ENCODE measurements at regions of chr10 and their contacts with region 1.

Region 1: GRCh38 chr10:90862908-90863514 is 5.2 kb upstream of the HTR7 start:
- DNase-seq: no peak
- H3K4me3 ChIP-seq: no peak overlapping the region
- H3K27ac ChIP-seq: no peak overlapping the region
- H3K4me1 ChIP-seq: peaks cover 0 to 9% (median 0%) of the 10 kb centered on the region in 3 donors
- H3K27me3 ChIP-seq: peaks cover 0 to 28% (median 0%) of the 10 kb centered on the region in 4 donors
- CTCF ChIP-seq: peak; percentile 26 to 84 (median 68)
- POLR2A ChIP-seq: no peak

Region 2: GRCh38 chr10:89793649-89794254 is 1069.3 kb before region 1 on chr10:
- intact Hi-C with region 1: loop called (anchors 10 kb)
- DNase-seq: no peak
- H3K4me3 ChIP-seq: no peak overlapping the region
- H3K27ac ChIP-seq: no peak overlapping the region
- H3K4me1 ChIP-seq: no peaks in the 10 kb centered on the region
- H3K27me3 ChIP-seq: no peaks in the 10 kb centered on the region
- CTCF ChIP-seq: peak; percentile 50 to 82 (median 76)
- POLR2A ChIP-seq: no peak

Region 3: DNA sequence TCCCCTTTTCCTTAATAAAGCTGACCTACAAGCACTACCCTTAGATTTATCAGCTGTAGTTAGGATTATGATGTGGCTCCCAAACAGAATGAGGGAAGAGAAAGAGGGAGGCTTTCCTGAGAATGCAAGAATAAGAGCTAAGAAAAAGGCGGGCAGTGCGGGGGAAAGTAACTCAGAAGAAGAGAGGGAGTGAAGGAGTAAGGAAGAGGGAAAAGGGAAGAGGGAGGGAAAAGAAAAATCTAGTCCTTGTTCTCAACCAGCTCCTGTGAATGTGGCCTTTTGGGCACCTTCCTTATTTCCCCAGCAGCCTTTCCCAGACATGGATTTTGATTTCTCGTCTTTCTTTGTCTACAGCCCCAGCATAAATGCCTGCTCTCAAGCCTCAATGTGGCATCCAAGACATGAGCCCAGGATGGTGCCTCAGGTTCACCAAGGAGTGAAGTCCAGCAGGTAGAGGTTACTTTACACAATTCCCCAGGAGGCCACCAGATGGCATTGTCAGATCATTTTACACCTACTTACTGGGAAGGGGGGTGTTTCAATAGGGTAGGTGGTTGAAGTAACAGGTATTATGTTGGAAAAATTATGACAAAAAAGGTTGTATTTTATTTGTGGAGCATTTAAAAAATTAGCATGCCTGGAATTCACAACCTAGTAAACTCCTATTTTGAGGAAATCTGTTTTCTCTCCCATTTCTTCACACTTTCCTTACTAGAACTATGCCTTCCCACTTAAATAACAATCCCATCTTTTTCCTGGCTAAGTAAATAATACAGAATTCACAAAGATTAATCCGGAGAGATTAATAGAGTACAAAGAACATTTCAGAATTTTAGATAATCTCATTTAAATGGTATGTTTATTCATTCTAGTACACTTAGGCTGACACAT is 111.7 kb before region 1 on chr10:
- intact Hi-C with region 1: loop called (anchors 5 kb)
- DNase-seq: no peak
- H3K4me3 ChIP-seq: no peak overlapping the region
- H3K27ac ChIP-seq: no peak overlapping the region
- H3K4me1 ChIP-seq: peaks cover 0 to 7% (median 0%) of the 10 kb centered on the region in 3 donors
- H3K27me3 ChIP-seq: peaks cover 0 to 5% (median 0%) of the 10 kb centered on the region in 4 donors
- CTCF ChIP-seq: peak in 5 of 6 experiments; percentile 57 to 75 (median 61)
- POLR2A ChIP-seq: no peak